ENCODE measurements at regions of chr12 and their contacts with region 1.

Region 1: GRCh38 chr12:52980693-52981423 is 25.4 kb upstream of the EIF4B start:
- DNase-seq: peak; percentile 85 to 92 (median 88)
- ATAC-seq: peak; percentile 71 to 96 (median 95)
- H3K4me3 ChIP-seq: no peak overlapping the region
- H3K27ac ChIP-seq: no peak overlapping the region
- H3K4me1 ChIP-seq: peaks cover 0 to 3% (median 0%) of the 10 kb centered on the region in 12 donors
- H3K27me3 ChIP-seq: peaks cover 0 to 20% (median 0%) of the 10 kb centered on the region in 9 donors
- CTCF ChIP-seq: peak; percentile 88 to 99 (median 96)
- POLR2A ChIP-seq: no peak

Region 2: DNA sequence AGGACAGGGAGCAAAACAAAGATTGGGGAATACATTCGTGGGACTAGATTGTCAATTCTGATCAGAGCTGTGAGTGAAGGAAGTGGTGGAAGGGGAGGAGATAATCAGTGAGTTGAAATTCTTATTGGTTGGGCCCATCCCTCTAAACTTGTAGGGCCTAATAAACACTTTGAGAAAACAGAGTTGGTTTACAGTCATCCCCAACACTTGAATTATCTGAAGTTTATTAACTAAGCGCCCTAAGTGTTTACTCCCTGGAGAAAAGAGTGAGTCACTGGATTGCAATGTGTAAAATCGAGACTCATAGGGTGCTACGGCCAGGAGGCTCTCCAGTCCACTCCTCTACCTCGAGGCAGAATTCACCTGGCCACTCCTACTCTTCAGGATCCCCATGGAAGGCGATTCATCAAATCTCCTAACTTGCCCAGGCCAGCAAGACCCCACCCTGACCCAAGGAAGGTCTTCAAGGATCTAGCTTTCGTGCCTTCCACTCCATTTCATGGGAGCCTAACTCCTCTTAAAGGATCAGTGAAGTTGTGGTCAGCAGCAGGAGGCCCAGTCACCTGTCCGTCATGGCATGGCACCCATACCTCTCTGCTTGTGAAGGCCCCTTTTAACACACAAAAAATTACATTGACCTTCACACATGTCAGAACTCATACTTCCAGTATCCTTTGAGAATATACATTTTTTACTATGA is 181.6 kb before region 1 on chr12:
- intact Hi-C with region 1: no loop called
- DNase-seq: no peak
- ATAC-seq: no peak
- H3K4me3 ChIP-seq: no peak overlapping the region
- H3K27ac ChIP-seq: no peak overlapping the region
- H3K4me1 ChIP-seq: no peaks in the 10 kb centered on the region
- H3K27me3 ChIP-seq: no peaks in the 10 kb centered on the region
- CTCF ChIP-seq: no peak
- POLR2A ChIP-seq: no peak

Region 3: DNA sequence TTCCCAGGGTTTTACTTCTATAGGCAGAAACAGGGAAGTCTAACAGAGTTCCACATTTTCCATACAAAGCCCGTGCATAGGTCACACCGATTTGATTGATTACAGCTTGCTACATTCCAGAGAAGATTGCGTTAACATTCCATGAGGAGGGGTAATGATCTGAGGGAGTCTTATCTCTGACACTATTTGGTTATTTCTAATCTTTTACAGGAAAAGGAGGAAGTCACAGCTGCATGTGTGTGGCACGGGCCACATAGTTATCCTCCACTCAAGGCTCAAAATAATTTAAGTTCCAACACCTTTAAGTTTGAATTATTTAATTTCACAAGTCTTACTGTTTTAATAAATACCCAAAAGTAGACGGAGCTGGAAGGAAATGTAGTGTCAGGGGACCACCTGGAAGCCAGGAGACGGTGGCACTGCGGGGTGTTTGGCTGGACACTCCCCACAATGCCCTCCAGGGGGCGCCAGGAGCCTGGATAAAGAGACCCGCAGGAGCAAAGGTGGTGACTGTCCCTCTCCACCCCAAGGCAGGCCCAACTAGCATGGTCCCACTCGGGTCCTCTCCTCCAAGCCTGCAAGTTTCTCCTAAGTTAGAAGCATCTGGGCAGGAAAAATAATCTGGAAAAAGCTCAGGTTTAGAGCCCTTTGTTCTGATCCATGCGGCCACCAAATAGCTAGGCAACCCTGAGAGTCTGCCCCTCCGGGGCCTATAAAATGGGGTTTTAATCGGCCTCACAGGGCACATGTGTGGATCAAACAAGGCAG is 96.1 kb before region 1 on chr12:
- intact Hi-C with region 1: loop called (anchors 1 to 2 kb)
- DNase-seq: peak; percentile 68 to 90 (median 74)
- ATAC-seq: peak; percentile 59 to 83 (median 83)
- H3K4me3 ChIP-seq: no peak overlapping the region
- H3K27ac ChIP-seq: no peak overlapping the region
- H3K4me1 ChIP-seq: peaks cover 0 to 6% (median 1%) of the 10 kb centered on the region in 12 donors
- H3K27me3 ChIP-seq: peaks cover 0 to 17% (median 0%) of the 10 kb centered on the region in 9 donors
- CTCF ChIP-seq: peak; percentile 85 to 95 (median 92)
- POLR2A ChIP-seq: no peak

Region 4: GRCh38 chr12:52903285-52903854 is 77.5 kb before region 1 on chr12:
- intact Hi-C with region 1: loop called in 1 of 10 experiments (anchors 5 kb)
- DNase-seq: peak; percentile 76 to 88 (median 85)
- ATAC-seq: peak; percentile 84 to 95 (median 94)
- H3K4me3 ChIP-seq: peak overlapping the region; percentile 17 to 69 (median 54)
- H3K27ac ChIP-seq: peak overlapping the region in 7 of 12 donors; percentile 41 to 82 (median 76)
- H3K4me1 ChIP-seq: peaks cover 0 to 20% (median 2%) of the 10 kb centered on the region in 12 donors
- H3K27me3 ChIP-seq: peaks cover 0 to 3% (median 0%) of the 10 kb centered on the region in 9 donors
- CTCF ChIP-seq: no peak
- POLR2A ChIP-seq: peak in 1 of 2 donors; percentile 34

Region 5: GRCh38 chr12:53336181-53336681 is 355.4 kb after region 1 on chr12 and contains the start of gene SP7:
- intact Hi-C with region 1: no loop called
- DNase-seq: no peak
- ATAC-seq: no peak
- H3K4me3 ChIP-seq: no peak within 1 kb of the TSS
- H3K27ac ChIP-seq: no peak within 1 kb of the TSS
- H3K4me1 ChIP-seq: peaks cover 0 to 8% (median 0%) of the 10 kb centered on the region in 12 donors
- H3K27me3 ChIP-seq: peaks cover 0 to 29% (median 6%) of the 10 kb centered on the region in 9 donors
- CTCF ChIP-seq: no peak
- POLR2A ChIP-seq: no peak
- total RNA-seq, gene SP7: not detected

Measured in heart left ventricle (tissue), 16 donors.